Common myeloid progenitor, CD34-positive (primary cell): ENCODE measurements at regions of chr3 and their contacts with region 1.

Region 1: GRCh38 chr3:129316131-129317013 is 37.7 kb downstream of the HMCES start:
- DNase-seq: peak; percentile 77 to 87 (median 85)
- H3K4me3 ChIP-seq: peak overlapping the region; percentile 83 to 94 (median 89)
- H3K27ac ChIP-seq: peak overlapping the region; percentile 68 to 89
- H3K4me1 ChIP-seq: peaks cover 4 to 30% (median 29%) of the 10 kb centered on the region in 4 experiments
- H3K27me3 ChIP-seq: no peaks in the 10 kb centered on the region

Region 2: GRCh38 chr3:129278439-129278970 is 37.9 kb before region 1 on chr3 and contains the start of gene HMCES:
- CTCF ChIA-PET with region 1: interaction called, 11 read pairs
- POLR2A ChIA-PET with region 1: interaction called, 26 read pairs
- DNase-seq: peak; percentile 90 to 97 (median 95)
- H3K4me3 ChIP-seq: peak within 1 kb of the TSS; percentile 64 to 99 (median 89)
- H3K27ac ChIP-seq: peak within 1 kb of the TSS; percentile 84 to 87
- H3K4me1 ChIP-seq: peaks cover 6 to 29% (median 19%) of the 10 kb centered on the region in 4 experiments
- H3K27me3 ChIP-seq: no peaks in the 10 kb centered on the region

Region 3: DNA sequence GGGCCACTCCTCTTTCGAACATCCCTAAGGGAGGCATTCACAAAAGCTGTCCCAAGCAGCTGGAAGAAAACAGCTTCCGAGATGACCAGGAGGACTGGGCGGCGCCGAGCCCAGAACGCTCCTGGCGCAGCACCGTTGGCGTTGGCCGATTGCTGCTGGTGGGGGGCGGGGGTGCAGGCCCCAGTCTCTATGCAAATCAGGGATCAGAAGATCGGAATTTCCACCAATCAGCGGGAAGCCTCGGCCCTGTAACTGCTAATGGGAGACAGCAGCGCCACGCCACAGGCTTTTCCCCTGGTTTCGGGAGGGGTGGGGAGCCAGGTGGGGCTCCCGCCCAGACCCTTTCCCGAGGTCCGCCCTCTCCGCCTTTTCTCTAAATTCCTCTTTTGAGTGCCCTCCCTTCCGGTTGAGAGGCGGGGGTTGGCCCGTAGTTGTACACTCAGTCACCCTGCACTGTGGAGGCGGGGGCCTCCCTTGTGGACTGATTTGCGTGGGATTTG is 10.7 kb before region 1 on chr3:
- CTCF ChIA-PET with region 1: interaction called, 7 read pairs
- POLR2A ChIA-PET with region 1: interaction called, 11 read pairs
- DNase-seq: peak; percentile 64 to 84 (median 83)
- H3K4me3 ChIP-seq: peak overlapping the region in 5 of 7 experiments; percentile 46 to 74 (median 59)
- H3K27ac ChIP-seq: peak overlapping the region in 1 of 2 experiments; percentile 32
- H3K4me1 ChIP-seq: peaks cover 8 to 27% (median 25%) of the 10 kb centered on the region in 4 experiments
- H3K27me3 ChIP-seq: no peaks in the 10 kb centered on the region

Region 4: DNA sequence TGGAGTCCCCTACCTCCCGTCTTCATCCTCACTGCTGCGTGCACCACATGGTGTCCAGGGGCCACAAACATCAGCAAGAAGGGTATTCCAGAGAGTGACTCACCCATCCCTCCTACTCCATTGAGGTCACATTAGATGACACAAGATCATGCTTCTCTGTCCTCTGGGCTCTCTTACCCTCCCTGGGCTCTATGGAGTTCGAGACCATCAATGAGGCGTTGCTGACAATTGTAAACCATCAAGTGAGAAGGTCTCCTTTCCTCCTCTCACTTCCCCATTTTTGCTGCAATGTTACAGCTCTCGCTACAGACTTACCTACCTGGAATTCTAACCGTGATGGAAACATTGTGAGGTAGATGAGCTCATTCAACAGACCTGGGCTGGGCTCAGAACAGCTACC is 14.0 kb after region 1 on chr3:
- CTCF ChIA-PET with region 1: interaction called, 25 read pairs
- POLR2A ChIA-PET with region 1: interaction called, 10 read pairs
- DNase-seq: no peak
- H3K4me3 ChIP-seq: no peak overlapping the region
- H3K27ac ChIP-seq: no peak overlapping the region
- H3K4me1 ChIP-seq: no peaks in the 10 kb centered on the region
- H3K27me3 ChIP-seq: no peaks in the 10 kb centered on the region